AG04449 (cell line): ENCODE measurements at regions of chr15 and their contacts with region 1.

Region 1: DNA sequence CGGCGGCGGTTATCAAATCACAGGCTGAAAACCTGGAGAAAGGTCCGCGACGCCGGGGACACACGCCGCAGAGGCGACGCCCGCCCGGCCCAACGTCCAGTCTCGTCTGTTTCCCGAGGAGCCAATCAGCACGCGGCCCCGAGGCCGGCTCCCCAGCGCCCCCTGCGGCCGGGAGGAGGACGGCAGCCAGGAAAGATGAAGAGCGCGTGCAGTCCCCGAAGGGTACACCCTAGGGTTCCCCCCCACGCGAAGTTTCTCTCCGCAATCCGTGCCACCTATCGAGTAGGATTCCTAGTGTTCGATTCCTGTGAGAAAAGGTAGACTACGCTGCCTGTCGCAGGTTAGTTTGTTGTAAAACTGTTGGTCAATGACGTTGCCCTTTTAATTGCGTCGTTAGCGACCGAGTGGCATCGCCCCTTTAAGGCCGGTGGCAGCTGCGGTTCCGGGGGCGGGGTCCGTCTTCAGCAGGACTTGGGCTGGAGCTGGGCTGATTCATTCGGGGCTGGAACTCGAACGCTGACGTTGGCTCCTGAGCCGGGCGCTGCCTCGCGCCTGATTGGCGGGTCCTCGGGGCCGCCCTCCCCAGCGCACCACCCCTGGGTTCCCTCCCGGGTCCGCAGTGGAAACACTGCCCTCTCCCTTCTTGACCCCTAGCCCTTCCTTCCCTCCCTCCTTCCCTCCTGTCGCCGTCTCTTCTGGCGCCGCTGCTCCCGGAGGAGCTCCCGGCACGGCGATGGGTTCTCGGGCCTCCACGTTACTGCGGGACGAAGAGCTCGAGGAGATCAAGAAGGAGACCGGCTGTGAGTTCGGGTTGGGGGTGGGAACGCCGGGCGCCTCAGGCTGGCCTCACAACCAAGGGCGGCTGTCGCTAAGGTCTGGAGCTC is at the starts of genes CHP1 and EXD1:
- DNase-seq: peak; percentile 79
- H3K4me3 ChIP-seq: peak within 1 kb of the TSS; percentile 99
- CTCF ChIP-seq: peak; percentile 97

Region 2: GRCh38 chr15:40146037-40146436 is 1084.9 kb before region 1 on chr15:
- CTCF ChIA-PET with region 1: no interaction called
- POLR2A ChIA-PET with region 1: no interaction called
- DNase-seq: no peak
- H3K4me3 ChIP-seq: no peak overlapping the region
- CTCF ChIP-seq: no peak

Region 3: DNA sequence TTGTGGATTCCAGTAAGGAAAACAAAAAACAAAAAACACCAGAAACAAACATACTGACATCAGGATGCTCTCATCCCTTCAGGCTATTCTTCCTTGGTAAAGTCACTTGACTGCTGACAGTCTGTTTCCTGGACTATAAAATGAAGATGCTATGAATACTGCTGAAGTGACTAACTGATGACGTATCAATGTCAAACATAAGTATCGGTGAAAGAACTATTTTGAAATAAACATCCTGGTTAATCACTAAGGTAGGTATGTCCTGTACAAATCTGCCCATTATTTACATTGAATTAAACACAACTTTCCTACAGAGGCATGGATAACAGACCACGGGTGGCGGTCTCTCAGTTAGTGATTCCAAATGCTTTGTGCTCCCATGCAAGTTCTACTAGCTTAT is 231.7 kb before region 1 on chr15:
- CTCF ChIA-PET with region 1: no interaction called
- POLR2A ChIA-PET with region 1: no interaction called
- DNase-seq: no peak
- H3K4me3 ChIP-seq: no peak overlapping the region
- CTCF ChIP-seq: no peak

Region 4: GRCh38 chr15:41218851-41219250 is 12.0 kb before region 1 on chr15:
- CTCF ChIA-PET with region 1: interaction called, 11 read pairs
- POLR2A ChIA-PET with region 1: no interaction called
- DNase-seq: no peak
- H3K4me3 ChIP-seq: no peak overlapping the region
- CTCF ChIP-seq: no peak

Region 5: DNA sequence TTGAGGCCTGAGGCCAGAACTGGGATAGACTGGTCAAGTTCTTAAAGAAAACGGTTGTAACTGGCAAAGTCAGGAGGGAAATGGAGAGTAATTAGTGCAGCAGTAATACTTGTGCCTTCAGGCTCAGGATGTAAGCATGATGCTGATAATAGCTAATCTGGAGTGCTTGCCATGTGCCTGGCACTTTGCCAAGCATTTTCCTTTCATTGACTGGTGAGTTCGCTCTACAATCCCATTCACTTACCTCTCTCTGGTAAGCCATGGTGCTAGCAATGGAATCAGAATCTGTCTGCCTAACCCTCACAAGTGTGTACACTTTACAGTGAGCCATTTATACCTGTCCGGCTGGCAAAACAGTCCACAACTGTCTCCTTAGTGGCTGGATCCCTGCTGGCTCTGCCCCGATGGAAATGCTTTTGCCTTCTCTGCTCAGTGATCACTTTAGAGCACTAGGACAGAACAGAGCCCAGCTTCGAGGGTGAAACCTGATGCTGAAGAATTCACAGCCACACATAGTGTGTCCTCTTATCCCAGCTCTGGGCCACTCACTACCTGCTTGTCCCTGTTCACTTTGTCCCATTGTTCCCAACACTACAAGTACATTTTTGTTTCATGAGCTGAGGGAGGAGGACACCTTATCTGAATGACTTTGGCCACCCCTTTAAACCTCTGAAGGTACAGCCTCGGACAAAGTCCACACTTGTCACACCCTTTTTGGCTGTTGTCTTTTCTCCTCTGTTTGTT is 10.5 kb after region 1 on chr15:
- CTCF ChIA-PET with region 1: interaction called, 16 read pairs
- POLR2A ChIA-PET with region 1: interaction called, 3 read pairs
- DNase-seq: no peak
- H3K4me3 ChIP-seq: no peak overlapping the region
- CTCF ChIP-seq: no peak